CD4-positive, alpha-beta T cell (primary cell): ENCODE measurements at regions of chr1 and their contacts with region 1.

Region 1: GRCh38 chr1:154791292-154792166 is 78.6 kb downstream of the KCNN3 start:
- DNase-seq: peak; percentile 71 to 95 (median 82)
- ATAC-seq: peak; percentile 98
- H3K4me3 ChIP-seq: no peak overlapping the region
- H3K4me3 Mint-ChIP-seq: peak overlapping the region; percentile 70
- H3K27ac ChIP-seq: peak overlapping the region in 1 of 2 donors; percentile 51
- H3K27ac Mint-ChIP-seq: peak overlapping the region; percentile 71
- H3K4me1 ChIP-seq: peaks cover 26% of the 10 kb centered on the region
- H3K4me1 Mint-ChIP-seq: peaks cover 33% of the 10 kb centered on the region
- H3K27me3 ChIP-seq: no peaks in the 10 kb centered on the region
- H3K27me3 Mint-ChIP-seq: no peaks in the 10 kb centered on the region
- CTCF ChIP-seq: peak; percentile 38

Region 2: DNA sequence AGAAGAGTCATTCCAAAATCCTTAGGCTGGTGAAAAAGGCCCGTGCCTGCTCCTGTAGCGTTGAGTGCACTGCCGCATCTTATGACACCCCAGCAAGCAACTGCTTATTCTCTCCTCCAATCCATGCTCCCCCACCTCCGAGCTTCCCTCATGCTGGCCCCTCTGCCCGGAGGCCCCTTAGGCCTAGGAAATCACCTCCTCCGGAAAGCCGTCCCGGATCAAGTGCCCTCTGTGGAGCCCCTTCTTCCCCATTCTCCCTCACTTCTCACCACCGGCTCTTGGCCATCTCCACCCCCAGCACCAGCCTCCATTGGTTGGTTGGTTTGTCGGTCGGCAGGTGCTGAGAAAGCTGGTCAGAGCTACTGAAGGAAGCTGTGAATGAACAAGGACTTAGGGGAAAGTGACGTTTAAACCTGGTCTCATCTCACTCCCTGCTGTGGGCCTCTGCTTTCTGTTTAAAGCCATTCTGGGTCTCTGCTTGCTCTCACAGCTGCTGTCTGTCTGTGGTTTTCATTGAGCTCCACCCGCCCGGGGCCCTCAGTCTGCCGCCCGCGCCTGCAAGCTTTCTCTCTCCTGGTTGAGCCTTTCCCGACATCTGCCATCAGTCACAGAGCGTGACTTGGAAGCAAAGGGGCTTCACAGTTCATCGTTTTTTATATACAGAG is 43.7 kb before region 1 on chr1:
- CTCF ChIA-PET with region 1: interaction called, 5 read pairs
- POLR2A ChIA-PET with region 1: interaction called, 11 read pairs
- intact Hi-C with region 1: loop called in 1 of 2 experiments (anchors 5 kb)
- DNase-seq: peak; percentile 22 to 70 (median 54)
- ATAC-seq: peak; percentile 88
- H3K4me3 ChIP-seq: peak overlapping the region; percentile 24
- H3K4me3 Mint-ChIP-seq: peak overlapping the region; percentile 83
- H3K27ac ChIP-seq: peak overlapping the region; percentile 50 to 61
- H3K27ac Mint-ChIP-seq: peak overlapping the region; percentile 93
- H3K4me1 ChIP-seq: peaks cover 48% of the 10 kb centered on the region
- H3K4me1 Mint-ChIP-seq: peaks cover 54% of the 10 kb centered on the region
- H3K27me3 ChIP-seq: no peaks in the 10 kb centered on the region
- H3K27me3 Mint-ChIP-seq: no peaks in the 10 kb centered on the region
- CTCF ChIP-seq: no peak

Region 3: DNA sequence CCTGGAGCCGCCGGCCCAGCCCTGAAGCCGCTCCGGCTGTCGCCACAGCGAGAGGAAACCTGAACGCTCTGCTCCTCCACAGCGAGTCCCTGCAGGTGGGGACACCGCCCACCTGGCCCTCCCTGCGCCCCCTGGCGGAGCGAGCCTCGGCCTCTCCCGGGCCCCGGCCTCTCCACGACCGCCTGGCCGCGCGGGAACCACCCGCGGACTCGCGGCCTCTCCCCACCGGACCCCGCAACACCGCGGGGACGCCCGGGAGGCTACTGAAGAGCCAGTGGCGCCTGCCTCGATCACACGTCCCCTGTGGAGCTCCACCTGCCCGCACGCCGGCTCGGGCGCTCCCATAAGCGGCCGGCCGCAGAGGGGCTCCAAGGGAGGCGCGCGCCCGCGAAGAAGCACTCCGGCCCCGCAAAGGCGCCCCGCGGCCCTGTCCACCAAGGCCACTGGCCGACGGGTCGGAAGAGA is 31.0 kb before region 1 on chr1:
- CTCF ChIA-PET with region 1: interaction called, 18 read pairs
- POLR2A ChIA-PET with region 1: interaction called, 7 read pairs
- intact Hi-C with region 1: loop called (anchors 1 to 2 kb)
- DNase-seq: peak; percentile 70 to 92 (median 83)
- ATAC-seq: peak; percentile 88
- H3K4me3 ChIP-seq: peak overlapping the region; percentile 44
- H3K4me3 Mint-ChIP-seq: no peak overlapping the region
- H3K27ac ChIP-seq: no peak overlapping the region
- H3K27ac Mint-ChIP-seq: no peak overlapping the region
- H3K4me1 ChIP-seq: peaks cover 21% of the 10 kb centered on the region
- H3K4me1 Mint-ChIP-seq: peaks cover 42% of the 10 kb centered on the region
- H3K27me3 ChIP-seq: no peaks in the 10 kb centered on the region
- H3K27me3 Mint-ChIP-seq: no peaks in the 10 kb centered on the region
- CTCF ChIP-seq: peak; percentile 92

Region 4: DNA sequence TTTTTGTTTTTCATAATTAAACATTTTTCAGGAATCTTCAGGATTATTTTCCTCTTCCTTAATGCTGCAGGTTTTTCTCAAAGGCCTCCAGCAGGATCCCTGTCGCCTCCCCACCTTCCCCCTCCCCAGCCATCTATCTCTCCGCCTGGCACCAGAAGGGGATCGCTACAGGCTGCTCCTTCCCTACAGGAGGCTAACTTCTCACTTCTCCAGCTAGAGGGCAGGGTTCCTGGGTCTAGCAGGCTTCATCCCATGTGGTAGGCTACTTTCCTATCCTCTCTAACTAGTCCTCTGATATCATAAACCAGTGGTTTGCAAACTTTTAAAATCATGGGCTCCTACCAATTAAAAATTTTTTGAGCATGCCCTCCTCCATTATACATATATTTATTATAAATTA is 25.6 kb before region 1 on chr1:
- CTCF ChIA-PET with region 1: interaction called, 18 read pairs
- POLR2A ChIA-PET with region 1: interaction called, 7 read pairs
- intact Hi-C with region 1: loop called in 1 of 2 experiments (anchors 2 kb)
- DNase-seq: peak in 5 of 14 experiments; percentile 30 to 58 (median 42)
- ATAC-seq: peak; percentile 79
- H3K4me3 ChIP-seq: no peak overlapping the region
- H3K4me3 Mint-ChIP-seq: no peak overlapping the region
- H3K27ac ChIP-seq: no peak overlapping the region
- H3K27ac Mint-ChIP-seq: no peak overlapping the region
- H3K4me1 ChIP-seq: no peaks in the 10 kb centered on the region
- H3K4me1 Mint-ChIP-seq: no peaks in the 10 kb centered on the region
- H3K27me3 ChIP-seq: no peaks in the 10 kb centered on the region
- H3K27me3 Mint-ChIP-seq: no peaks in the 10 kb centered on the region
- CTCF ChIP-seq: peak; percentile 25

Region 5: GRCh38 chr1:154925335-154926170 is 134.0 kb after region 1 on chr1:
- CTCF ChIA-PET with region 1: no interaction called
- POLR2A ChIA-PET with region 1: no interaction called
- intact Hi-C with region 1: no loop called
- DNase-seq: no peak
- ATAC-seq: no peak
- H3K4me3 ChIP-seq: no peak overlapping the region
- H3K4me3 Mint-ChIP-seq: no peak overlapping the region
- H3K27ac ChIP-seq: no peak overlapping the region
- H3K27ac Mint-ChIP-seq: peak overlapping the region; percentile 20
- H3K4me1 ChIP-seq: peaks cover 13% of the 10 kb centered on the region
- H3K4me1 Mint-ChIP-seq: peaks cover 7% of the 10 kb centered on the region
- H3K27me3 ChIP-seq: no peaks in the 10 kb centered on the region
- H3K27me3 Mint-ChIP-seq: no peaks in the 10 kb centered on the region
- CTCF ChIP-seq: no peak